GM18951 (cell line): ENCODE measurements at regions of chr1 and their contacts with region 1.

Region 1: GRCh38 chr1:174736831-174737230 is 262.9 kb upstream of the CACYBP start:
- POLR2A ChIP-seq: no peak

Region 2: GRCh38 chr1:174097426-174097825 is 639.4 kb before region 1 on chr1:
- in situ Hi-C with region 1: loop called (anchors 10 kb)
- POLR2A ChIP-seq: no peak

Region 3: DNA sequence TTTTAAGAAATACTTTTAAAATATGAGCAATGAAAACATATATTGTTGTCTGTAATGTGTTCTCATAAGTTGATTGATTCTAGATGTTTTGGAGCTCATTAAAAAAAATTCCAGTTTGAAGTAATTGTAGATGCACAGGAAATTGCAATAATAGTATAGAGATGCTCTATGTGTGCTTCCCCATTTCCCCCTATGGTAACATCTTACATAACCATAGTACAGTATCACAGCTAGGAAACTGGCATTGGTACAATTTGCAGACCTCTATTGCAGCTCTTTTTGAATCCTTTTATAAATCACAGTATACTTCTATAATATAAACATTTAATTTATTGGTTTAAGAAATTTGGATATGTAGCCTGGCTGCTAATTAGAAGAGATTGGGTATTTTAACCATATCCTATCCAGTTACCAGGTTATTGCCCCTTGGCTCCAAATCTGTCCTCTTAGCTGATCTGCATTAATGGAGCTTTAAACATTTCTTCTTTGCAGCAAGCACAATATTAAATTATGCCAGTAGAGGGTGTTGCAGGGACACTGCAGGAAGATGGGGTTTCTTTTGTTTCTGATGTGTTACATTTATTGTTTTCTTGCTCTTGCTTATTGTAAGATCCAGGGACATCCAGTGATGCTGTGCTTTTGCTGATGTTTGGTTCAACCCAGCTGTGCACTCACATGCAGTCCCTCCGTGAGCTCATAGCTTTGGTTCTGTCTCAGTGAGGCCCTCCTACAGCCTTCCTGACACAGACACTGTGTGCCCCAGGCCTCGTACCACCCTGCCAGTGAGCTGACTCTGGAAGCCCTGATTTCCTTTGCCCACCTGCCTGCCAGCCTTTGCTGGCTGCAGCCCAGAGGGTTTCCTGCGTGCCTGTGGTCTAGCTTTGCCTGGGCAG is 474.2 kb before region 1 on chr1:
- in situ Hi-C with region 1: loop called (anchors 5 kb)
- POLR2A ChIP-seq: no peak